Activated naive CD8-positive, alpha-beta T cell treated with anti-CD3 and anti-CD28 coated beads, Interleukin-2, amount 10 ng/mL, durations not matched to agents 7 days and 5 days (primary cell): ENCODE measurements at regions of chr3 and their contacts with region 1.

Region 1: GRCh38 chr3:36911990-36912804 is 32.7 kb downstream of the TRANK1 start:
- DNase-seq: no peak
- ATAC-seq: peak; percentile 89
- H3K4me3 Mint-ChIP-seq: peak overlapping the region; percentile 81
- H3K27ac Mint-ChIP-seq: peak overlapping the region; percentile 92
- H3K4me1 Mint-ChIP-seq: peaks cover 32% of the 10 kb centered on the region
- H3K27me3 Mint-ChIP-seq: no peaks in the 10 kb centered on the region

Region 2: GRCh38 chr3:36944012-36944640 is 31.9 kb after region 1 on chr3:
- POLR2A ChIA-PET with region 1: interaction called, 14 read pairs
- DNase-seq: peak; percentile 69
- ATAC-seq: peak; percentile 37
- H3K4me3 Mint-ChIP-seq: peak overlapping the region; percentile 81
- H3K27ac Mint-ChIP-seq: peak overlapping the region; percentile 45
- H3K4me1 Mint-ChIP-seq: peaks cover 13% of the 10 kb centered on the region
- H3K27me3 Mint-ChIP-seq: peaks cover 2% of the 10 kb centered on the region